BJ (cell line): ENCODE measurements at regions of chr14 and their contacts with region 1.

Region 1: GRCh38 chr14:67571272-67571850 is 28.7 kb downstream of the PIGH start:
- DNase-seq: no peak
- H3K4me3 ChIP-seq: no peak overlapping the region
- H3K27me3 ChIP-seq: no peaks in the 10 kb centered on the region; the same call in 1 of the 2 replicates
- CTCF ChIP-seq: peak; percentile 94

Region 2: DNA sequence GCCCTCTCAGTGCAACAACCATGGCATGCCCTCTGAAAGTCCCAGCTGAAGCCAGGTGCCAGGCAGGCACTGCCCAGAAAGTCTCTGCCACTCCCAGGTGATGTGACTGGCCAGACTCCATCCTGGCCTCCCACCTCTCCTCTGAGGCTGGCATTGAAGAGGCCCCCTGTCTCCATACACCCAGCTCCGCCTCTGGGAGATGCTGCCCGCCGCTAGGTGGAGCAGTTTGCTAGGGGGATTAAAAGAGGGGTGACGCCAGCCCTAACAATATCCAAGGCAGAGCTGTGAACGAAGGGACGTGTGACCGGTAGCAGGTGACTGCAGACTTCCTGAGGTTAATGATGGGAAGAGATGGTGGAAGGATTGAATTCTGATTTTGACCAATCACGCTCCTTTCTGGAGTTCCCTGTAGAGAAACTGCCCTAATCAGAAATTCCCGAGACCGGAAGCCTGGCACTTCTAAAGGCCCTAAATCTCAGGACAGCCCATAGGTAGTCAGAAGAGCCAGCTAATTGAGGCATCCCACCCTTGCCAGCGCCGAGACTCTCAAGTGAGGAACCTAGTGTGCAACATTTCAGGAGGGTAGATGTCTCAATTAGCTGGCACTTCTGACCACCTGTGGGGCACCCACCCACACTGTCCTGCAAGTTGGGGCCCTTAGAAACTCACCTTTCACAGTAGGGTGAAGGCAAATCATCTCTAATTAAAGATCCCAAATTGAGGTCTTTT is 151.1 kb before region 1 on chr14:
- CTCF ChIA-PET with region 1: interaction called, 280 read pairs
- POLR2A ChIA-PET with region 1: no interaction called
- DNase-seq: no peak
- H3K4me3 ChIP-seq: no peak overlapping the region
- H3K27me3 ChIP-seq: no peaks in the 10 kb centered on the region
- CTCF ChIP-seq: peak; percentile 52

Region 3: DNA sequence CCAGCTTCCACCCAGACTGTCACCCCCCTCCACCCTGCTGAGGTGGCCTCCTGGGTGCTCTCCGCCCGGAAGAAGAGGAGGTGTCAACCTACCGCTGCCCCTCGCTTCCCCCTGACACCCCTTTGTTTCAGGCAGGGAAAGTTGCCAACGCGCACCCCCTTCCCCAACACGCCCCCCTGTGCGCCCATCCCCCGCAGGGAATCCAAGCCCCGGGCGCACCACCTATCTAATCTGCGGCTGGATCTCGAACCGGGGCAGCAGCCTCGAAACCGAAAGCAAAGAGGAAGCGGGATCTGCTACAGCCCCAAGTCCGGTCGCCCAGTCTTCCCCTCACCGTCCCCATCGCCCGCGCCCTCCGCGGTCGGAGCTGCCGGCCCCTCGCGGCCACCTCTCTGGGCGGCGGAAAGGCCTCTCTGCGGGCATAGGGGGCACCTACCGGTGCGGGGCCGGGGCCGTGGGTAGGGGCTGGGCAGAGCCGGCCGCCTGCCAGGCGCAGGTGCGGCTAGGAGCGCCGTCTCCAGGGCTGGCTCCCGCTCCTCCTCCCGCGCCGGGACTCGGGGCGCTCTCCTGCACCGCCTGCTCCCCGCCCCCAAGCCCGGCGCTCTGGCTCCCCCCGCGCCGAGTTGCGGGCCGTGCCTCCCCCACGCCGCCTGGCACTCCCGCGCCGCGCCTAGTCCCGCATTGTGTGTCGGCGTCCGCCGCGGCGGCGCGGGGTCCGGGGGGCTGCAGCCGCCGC is 56.5 kb before region 1 on chr14:
- CTCF ChIA-PET with region 1: interaction called, 27 read pairs
- POLR2A ChIA-PET with region 1: no interaction called
- DNase-seq: no peak
- H3K4me3 ChIP-seq: peak overlapping the region; percentile 59
- H3K27me3 ChIP-seq: peaks cover 28% of the 10 kb centered on the region
- CTCF ChIP-seq: no peak

Region 4: DNA sequence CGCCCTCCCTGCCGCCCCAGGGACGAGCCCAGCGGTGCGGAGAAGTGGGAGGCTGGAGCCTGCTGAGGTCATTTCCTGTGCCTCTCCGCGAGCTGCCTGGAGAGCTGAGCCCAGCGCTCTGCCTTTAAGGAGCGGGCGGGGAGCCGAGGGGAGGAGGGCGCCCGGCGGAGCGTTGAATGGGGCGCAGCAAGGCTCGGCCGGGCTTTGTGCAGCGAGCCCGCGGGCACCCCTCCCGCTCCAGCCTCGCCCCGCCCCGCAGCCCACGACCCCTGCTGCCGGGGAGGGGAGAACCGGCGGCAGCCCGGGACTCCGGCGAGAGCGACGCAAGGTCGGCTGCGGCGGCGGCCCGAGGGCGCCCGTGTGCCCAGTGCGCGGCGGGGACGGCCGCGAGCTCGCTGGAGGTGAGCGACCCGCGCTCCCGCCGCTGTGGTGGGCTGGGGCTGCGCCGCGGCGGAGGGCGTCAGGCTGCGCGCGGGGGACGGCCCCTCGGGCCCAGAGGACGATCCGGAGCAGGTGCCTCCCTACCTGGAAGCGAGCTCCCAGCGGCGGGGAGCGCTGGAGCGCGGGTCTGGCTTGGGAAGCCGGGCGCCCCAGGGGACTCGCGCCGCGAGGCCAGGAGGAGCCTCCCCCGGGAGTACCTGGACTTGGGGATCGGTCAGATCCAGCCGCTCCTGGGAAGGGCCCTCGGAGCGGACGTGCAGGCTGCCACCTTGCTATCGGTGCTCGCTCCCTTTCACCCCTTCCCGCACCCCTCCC is 38.2 kb before region 1 on chr14 and contains the start of gene PLEKHH1:
- CTCF ChIA-PET with region 1: interaction called, 96 read pairs
- POLR2A ChIA-PET with region 1: no interaction called
- DNase-seq: no peak
- H3K4me3 ChIP-seq: peak within 1 kb of the TSS; percentile 47
- H3K27me3 ChIP-seq: peaks cover 2% of the 10 kb centered on the region; the same call in 1 of the 2 replicates
- CTCF ChIP-seq: no peak
- polyA plus RNA-seq, gene PLEKHH1: 0.16 and 0.53 TPM in 2 replicates

Region 5: DNA sequence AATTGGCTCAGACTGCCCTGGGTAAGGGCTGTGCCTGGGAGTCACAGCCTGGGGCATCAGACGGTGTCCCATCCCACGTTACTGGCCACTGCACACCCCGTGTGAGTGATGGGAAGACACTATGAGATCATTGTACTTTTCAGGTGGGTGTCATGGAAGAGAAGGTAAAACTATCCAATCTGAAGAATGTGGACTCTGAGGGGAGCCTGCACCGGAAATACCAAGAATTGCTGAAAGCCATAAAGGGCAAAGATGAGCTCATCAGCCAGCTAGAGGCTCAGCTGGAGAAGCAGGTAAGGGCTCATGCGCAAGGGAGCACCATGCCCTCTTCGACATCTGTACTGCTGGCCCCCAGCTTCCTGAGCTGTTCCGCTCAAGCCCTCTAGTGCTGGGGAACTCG is 14.2 kb before region 1 on chr14:
- CTCF ChIA-PET with region 1: interaction called, 34 read pairs
- POLR2A ChIA-PET with region 1: no interaction called
- DNase-seq: no peak
- H3K4me3 ChIP-seq: no peak overlapping the region
- H3K27me3 ChIP-seq: peaks cover 3% of the 10 kb centered on the region
- CTCF ChIP-seq: no peak

Region 6: DNA sequence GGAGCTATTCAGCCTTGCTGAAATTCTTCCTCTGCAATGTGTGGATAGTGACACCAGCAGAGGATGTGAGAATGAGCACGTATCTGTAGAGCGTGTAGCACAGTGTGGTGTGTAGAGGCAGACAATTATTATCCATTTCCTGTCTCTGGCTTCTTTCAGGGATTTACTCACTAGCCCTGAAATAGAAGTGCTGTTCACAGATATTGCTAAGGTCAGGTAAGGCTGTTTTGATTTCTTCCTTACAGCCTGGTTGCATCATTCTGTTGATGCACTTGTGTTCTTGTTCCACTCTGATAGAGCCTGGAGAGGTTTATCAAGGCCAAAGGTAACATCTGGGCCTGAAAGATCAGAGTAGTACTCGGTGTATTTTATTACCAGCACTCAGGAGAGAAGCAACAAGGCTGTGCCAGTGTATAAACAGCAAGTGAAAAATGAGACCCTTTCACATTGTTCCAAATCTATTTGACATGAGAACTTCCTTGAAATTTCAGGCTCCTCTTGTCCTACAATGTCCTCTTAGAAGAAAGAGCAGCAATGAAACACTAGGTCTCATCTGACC is 65.1 kb after region 1 on chr14:
- CTCF ChIA-PET with region 1: no interaction called
- POLR2A ChIA-PET with region 1: no interaction called
- DNase-seq: no peak
- H3K4me3 ChIP-seq: no peak overlapping the region
- H3K27me3 ChIP-seq: no peaks in the 10 kb centered on the region
- CTCF ChIP-seq: no peak

Region 7: GRCh38 chr14:67704484-67705089 is 133.2 kb after region 1 on chr14:
- CTCF ChIA-PET with region 1: interaction called, 18 read pairs
- POLR2A ChIA-PET with region 1: no interaction called
- DNase-seq: no peak
- H3K4me3 ChIP-seq: no peak overlapping the region
- H3K27me3 ChIP-seq: no peaks in the 10 kb centered on the region
- CTCF ChIP-seq: peak; percentile 79